ENCODE measurements at regions of chr9 and their contacts with region 1.

Region 1: DNA sequence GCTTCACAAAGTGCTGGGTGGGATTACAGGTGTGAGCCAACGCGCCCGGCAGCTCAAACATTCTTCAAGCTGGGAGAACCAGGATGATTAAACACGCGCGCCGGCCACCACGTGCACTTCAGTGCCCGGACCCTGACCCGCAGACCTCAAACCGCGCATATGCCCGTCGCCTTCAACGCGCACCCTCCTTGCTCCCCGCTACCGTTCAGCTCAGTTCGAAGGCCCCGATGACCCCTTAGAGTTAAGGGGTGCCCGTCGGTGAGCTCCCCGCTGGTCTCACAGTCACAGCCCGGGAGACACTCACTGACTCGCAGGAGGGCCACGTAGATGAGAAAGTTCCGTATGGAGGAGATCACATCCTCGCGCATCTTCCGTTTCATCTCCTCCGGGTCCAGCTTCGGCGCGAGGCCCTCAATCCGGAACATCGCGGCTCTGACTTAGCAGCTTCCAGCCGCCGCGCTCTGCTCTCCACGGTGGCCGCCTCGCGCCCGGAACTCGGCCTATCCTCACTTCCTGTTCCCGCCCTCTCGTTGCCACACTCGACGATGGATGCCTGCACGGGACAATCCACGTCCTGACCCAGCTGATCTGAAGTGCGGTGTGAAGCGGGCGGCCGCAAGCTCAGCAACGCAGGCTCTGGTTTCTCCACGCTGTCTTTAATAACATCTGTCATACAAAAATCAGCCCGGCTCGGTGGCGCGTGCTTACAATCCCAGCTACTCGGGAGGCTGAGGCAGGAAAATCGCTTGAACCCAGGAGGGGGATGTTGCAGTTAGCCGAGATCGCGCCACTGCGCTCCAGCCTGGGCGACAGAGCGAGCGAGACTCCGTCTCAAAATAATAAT is at the start of gene TOMM5:
- DNase-seq: peak; percentile 98
- H3K4me3 Mint-ChIP-seq: peak within 1 kb of the TSS; percentile 97
- H3K27ac Mint-ChIP-seq: peak within 1 kb of the TSS; percentile 99
- H3K4me1 Mint-ChIP-seq: peaks cover 21% of the 10 kb centered on the region
- H3K27me3 Mint-ChIP-seq: peaks cover 16% of the 10 kb centered on the region
- total RNA-seq, gene TOMM5: 186 and 193 TPM in 2 replicates

Region 2: DNA sequence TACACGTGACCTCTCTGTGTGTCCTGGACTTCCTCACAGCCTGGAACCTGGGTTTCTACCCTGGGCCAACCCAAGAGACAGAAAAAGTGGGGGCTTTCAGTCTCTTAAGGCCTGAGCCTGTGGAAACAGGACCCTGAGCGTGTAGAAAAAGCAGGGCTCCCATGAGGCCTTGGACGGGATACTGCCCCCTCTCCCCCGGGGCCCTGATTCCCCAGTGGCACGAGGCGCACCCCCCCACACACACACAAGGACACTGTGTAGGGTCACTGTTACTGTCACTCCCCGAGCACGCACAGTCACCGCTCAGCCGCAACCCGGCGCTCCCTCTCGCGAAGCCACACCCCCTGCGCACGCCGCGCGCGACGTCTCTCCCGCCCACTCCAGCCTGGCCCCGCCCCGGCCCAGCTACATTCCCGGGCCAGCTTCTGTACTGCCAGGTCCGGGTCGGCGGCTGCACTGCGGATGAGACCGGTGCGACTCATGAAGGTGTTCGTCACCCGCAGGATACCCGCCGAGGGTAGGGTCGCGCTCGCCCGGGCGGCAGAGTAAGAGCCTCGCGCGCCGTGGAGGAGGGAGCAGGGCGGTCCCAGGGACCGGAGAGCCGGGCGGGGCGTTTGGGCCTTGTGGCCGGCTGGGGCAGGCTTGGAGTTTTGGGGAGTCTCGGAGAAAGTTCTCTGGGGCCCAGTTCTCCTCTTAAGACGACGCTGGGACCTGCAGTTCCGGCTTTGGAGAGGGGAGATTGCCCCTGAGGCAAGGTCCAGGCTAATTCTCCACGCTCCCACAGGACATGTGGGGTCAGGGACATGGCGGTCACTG is 169.8 kb before region 1 on chr9 and contains the start of gene GRHPR:
- intact Hi-C with region 1: loop called (anchors 5 kb)
- DNase-seq: peak; percentile 97
- H3K4me3 Mint-ChIP-seq: peak within 1 kb of the TSS; percentile 96
- H3K27ac Mint-ChIP-seq: peak within 1 kb of the TSS; percentile 97
- H3K4me1 Mint-ChIP-seq: peaks cover 18% of the 10 kb centered on the region
- H3K27me3 Mint-ChIP-seq: no peaks in the 10 kb centered on the region
- total RNA-seq, gene GRHPR: 72.5 and 76.5 TPM in 2 replicates

Region 3: DNA sequence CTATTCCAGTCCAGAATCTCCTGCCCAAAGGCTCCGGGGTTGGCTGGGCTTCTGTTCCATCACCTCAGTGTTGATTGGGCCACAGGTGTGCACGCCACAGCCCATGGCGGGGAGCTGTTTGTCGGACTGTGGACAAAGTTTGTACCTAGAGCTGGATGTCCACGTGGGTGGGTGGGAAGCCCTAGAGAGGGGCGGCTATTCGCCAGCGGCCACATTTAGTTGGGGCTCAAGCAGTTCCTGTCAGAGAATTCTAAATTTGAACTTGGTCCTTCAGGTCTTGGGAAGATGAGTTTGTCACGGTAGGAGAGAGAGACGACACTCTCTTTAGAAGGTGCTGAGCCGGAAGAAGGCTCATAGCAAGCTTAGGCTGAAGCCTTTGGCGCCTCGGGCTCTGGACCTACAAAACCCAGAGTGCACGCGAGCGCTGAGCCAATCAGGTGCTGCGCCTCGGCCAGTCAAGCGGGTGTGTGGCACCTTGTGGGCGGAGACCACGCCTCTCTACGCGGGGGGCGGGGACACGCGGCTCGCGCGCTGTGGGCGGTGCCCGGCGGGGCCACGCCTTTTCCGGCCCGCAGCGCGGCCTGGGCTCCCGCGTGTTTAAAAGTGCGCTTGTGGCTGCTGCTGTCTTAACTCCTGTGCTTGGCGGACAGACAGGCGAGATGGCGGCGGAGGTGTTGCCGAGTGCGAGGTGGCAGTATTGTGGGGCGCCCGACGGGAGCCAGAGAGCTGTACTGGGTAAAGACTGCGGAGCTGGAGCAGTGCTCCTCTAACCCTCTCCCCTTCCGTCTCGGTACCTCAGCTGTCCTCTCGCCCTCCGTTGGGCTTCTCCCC is 106.7 kb before region 1 on chr9 and contains the start of gene POLR1E:
- intact Hi-C with region 1: loop called (anchors 1 kb)
- DNase-seq: peak; percentile 99
- H3K4me3 Mint-ChIP-seq: peak within 1 kb of the TSS; percentile 91
- H3K27ac Mint-ChIP-seq: peak within 1 kb of the TSS; percentile 94
- H3K4me1 Mint-ChIP-seq: peaks cover 33% of the 10 kb centered on the region
- H3K27me3 Mint-ChIP-seq: peaks cover 9% of the 10 kb centered on the region
- total RNA-seq, gene POLR1E: 60.0 and 64.0 TPM in 2 replicates

Region 4: GRCh38 chr9:37650873-37651768 is 58.8 kb after region 1 on chr9 and contains the start of gene FRMPD1:
- intact Hi-C with region 1: loop called (anchors 2 kb)
- DNase-seq: peak; percentile 90
- H3K4me3 Mint-ChIP-seq: peak within 1 kb of the TSS; percentile 80
- H3K27ac Mint-ChIP-seq: no peak within 1 kb of the TSS
- H3K4me1 Mint-ChIP-seq: peaks cover 7% of the 10 kb centered on the region
- H3K27me3 Mint-ChIP-seq: peaks cover 70% of the 10 kb centered on the region
- total RNA-seq, gene FRMPD1: not detected in 2 replicates

Region 5: DNA sequence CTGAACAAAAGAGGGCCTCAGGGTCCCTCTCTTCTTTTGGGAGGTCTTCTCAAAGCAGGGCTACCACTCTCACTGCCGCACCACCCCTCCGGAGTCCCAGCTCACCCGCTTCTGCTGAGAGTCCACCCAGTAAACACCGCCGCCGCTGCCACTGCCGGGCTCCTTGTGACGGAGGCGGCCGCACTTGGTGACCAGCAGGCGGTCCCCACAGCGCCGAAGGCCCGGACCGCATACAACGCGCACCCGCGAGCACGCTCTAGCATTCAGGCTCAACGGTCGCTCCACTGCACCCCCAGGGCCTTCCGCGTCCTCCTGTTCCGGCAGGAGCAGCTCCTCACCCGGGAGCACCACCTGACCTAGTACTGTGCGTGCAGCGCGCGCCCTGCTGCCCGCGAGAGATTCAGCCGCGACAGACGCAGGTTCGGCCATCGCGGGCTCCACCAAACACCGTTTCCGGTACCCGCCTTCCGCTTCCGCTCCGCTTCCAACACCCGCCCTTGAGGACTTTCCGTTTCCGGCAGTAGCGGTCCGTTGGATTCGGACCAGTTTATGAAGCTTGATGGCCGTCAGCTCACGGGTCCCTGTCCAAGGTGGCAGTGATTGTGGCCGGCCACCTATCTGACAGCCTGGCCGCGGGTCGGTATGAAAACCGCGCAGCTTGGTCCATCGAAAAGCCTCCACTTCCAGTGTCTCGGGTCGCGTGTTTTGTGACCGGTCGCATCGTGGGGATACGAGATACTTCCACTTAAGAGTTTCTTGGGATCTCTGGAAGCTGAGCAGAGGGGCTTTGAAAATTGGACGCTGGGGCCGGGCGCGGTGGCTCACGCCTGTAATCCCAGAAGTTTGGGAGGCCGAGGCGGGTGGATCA is 192.5 kb after region 1 on chr9 and contains the start of gene EXOSC3:
- intact Hi-C with region 1: loop called (anchors 5 kb)
- DNase-seq: peak; percentile 97
- H3K4me3 Mint-ChIP-seq: peak within 1 kb of the TSS; percentile 98
- H3K27ac Mint-ChIP-seq: peak within 1 kb of the TSS; percentile 97
- H3K4me1 Mint-ChIP-seq: peaks cover 19% of the 10 kb centered on the region
- H3K27me3 Mint-ChIP-seq: no peaks in the 10 kb centered on the region
- total RNA-seq, gene EXOSC3: 104 and 109 TPM in 2 replicates

Measured in activated CD4-positive, alpha-beta T cell treated with anti-CD3 and anti-CD28 coated beads, Interleukin-2, amount 10 ng/mL, durations not matched to agents 24 days and 14 days (primary cell).